Activated B cell treated with CpG ODN at 0.5 μM for 24 hours (primary cell): ENCODE measurements at regions of chr20 and their contacts with region 1.

Region 1: DNA sequence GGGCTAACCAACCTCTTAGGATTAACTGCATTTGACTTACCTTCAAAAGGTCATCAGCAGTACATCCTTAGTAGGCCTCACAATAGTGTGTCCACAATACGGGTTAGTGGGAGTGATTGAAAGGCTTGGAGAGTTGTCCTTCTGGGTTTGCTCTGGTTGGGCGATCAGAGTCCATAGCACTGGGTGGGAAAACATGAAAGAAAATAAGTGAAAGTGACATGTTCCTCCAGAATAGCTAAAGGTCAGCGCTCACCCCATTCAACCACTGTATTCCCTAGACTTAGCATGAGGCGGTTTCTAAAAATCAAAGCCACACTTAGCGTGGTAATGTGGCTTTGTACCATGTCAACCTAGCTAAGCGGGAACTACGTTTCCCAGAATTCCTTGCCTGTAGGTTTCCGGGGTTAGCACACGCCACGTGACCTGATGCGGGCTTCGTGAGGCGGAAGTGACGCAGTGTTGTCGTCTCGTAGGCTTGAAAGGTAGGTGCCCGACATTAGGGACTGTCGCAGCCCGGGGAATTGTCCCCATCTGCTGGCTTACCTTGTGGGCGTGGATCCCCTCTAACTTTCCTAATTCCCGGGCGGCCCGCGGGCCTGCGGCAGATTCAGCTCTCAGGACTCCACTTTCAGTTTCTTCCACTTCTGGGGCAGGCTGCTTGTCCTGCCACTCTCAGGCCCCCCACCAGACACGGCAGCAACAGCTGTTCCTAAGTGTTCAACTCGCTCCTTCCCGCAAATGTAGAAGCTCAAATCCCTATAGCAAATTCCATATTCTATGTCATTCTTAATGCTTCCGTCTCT is 19.8 kb upstream of the SCP2D1 start:
- DNase-seq: peak; percentile 73
- ATAC-seq: peak; percentile 92
- H3K4me3 Mint-ChIP-seq: peak overlapping the region; percentile 93
- H3K27ac Mint-ChIP-seq: peak overlapping the region; percentile 97
- H3K4me1 Mint-ChIP-seq: peaks cover 18% of the 10 kb centered on the region
- H3K27me3 Mint-ChIP-seq: peaks cover 11% of the 10 kb centered on the region
- CTCF ChIP-seq: no peak

Region 2: DNA sequence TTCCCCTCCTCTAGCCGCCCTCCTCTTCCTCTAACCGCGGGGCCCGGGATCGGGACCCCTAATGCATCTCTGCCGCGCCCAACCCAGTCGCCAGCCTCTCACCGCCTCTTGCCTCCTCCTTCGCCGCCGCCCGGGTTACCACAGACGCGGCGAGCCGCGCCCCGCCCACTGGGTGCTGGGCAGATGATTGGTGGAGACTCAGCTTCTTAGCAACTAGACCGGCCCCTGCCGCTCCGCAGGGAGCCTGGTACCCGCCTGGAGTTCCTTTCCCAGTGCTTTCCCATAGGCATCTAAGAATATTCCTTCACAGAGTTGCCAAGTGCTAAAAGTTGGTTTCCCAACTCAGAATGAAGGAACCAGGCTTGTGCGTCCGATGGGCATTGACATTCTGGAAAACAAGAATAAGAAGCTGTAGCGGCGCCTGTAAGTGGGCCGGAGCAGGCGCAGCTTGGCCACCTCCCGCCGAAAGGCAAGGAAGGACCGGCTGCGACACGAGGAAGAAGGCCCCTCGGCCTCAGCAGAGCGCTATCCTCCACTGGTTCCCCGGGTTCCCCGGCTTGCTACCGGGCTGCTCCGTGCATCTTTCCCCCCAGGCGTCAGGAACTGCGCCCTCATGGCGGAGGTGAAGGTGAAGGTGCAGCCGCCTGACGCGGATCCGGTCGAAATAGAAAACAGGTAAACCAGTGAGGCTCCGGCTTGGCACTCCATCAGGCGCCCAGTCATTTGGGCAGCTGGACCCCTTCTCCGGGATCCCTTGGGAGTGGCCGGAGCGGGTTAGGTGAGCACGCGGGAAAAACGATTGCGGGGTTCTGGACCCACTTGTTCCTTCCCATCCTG is 326.7 kb before region 1 on chr20 and contains the starts of genes DZANK1 and POLR3F:
- CTCF ChIA-PET with region 1: no interaction called
- POLR2A ChIA-PET with region 1: no interaction called
- intact Hi-C with region 1: loop called (anchors 1 kb)
- DNase-seq: peak; percentile 88
- ATAC-seq: peak; percentile 96
- H3K4me3 Mint-ChIP-seq: peak within 1 kb of the TSS; percentile 99
- H3K27ac Mint-ChIP-seq: peak within 1 kb of the TSS; percentile 95
- H3K4me1 Mint-ChIP-seq: peaks cover 27% of the 10 kb centered on the region
- H3K27me3 Mint-ChIP-seq: no peaks in the 10 kb centered on the region
- CTCF ChIP-seq: no peak
- total RNA-seq, gene DZANK1: 5.3 and 6.0 TPM in 2 replicates
- total RNA-seq, gene POLR3F: 13.3 and 14.5 TPM in 2 replicates

Region 3: GRCh38 chr20:18566892-18567742 is 226.7 kb before region 1 on chr20 and contains the start of gene SMIM26:
- CTCF ChIA-PET with region 1: no interaction called
- POLR2A ChIA-PET with region 1: interaction called, 3 read pairs
- intact Hi-C with region 1: loop called (anchors 1 kb)
- DNase-seq: peak; percentile 91
- ATAC-seq: peak; percentile 96
- H3K4me3 Mint-ChIP-seq: peak within 1 kb of the TSS; percentile 94
- H3K27ac Mint-ChIP-seq: peak within 1 kb of the TSS; percentile 94
- H3K4me1 Mint-ChIP-seq: peaks cover 23% of the 10 kb centered on the region
- H3K27me3 Mint-ChIP-seq: no peaks in the 10 kb centered on the region
- CTCF ChIP-seq: no peak
- total RNA-seq, gene SMIM26: 48.9 and 51.7 TPM in 2 replicates

Region 4: GRCh38 chr20:18632196-18633009 is 161.4 kb before region 1 on chr20:
- CTCF ChIA-PET with region 1: interaction called, 6 read pairs
- POLR2A ChIA-PET with region 1: interaction called, 3 read pairs
- intact Hi-C with region 1: loop called (anchors 1 kb)
- DNase-seq: peak; percentile 40
- ATAC-seq: peak; percentile 98
- H3K4me3 Mint-ChIP-seq: no peak overlapping the region
- H3K27ac Mint-ChIP-seq: no peak overlapping the region
- H3K4me1 Mint-ChIP-seq: no peaks in the 10 kb centered on the region
- H3K27me3 Mint-ChIP-seq: no peaks in the 10 kb centered on the region
- CTCF ChIP-seq: peak; percentile 77

Region 5: GRCh38 chr20:18929800-18930199 is 136.0 kb after region 1 on chr20:
- CTCF ChIA-PET with region 1: no interaction called
- POLR2A ChIA-PET with region 1: no interaction called
- intact Hi-C with region 1: no loop called
- DNase-seq: no peak
- ATAC-seq: no peak
- H3K4me3 Mint-ChIP-seq: no peak overlapping the region
- H3K27ac Mint-ChIP-seq: no peak overlapping the region
- H3K4me1 Mint-ChIP-seq: no peaks in the 10 kb centered on the region
- H3K27me3 Mint-ChIP-seq: no peaks in the 10 kb centered on the region
- CTCF ChIP-seq: no peak

Region 6: DNA sequence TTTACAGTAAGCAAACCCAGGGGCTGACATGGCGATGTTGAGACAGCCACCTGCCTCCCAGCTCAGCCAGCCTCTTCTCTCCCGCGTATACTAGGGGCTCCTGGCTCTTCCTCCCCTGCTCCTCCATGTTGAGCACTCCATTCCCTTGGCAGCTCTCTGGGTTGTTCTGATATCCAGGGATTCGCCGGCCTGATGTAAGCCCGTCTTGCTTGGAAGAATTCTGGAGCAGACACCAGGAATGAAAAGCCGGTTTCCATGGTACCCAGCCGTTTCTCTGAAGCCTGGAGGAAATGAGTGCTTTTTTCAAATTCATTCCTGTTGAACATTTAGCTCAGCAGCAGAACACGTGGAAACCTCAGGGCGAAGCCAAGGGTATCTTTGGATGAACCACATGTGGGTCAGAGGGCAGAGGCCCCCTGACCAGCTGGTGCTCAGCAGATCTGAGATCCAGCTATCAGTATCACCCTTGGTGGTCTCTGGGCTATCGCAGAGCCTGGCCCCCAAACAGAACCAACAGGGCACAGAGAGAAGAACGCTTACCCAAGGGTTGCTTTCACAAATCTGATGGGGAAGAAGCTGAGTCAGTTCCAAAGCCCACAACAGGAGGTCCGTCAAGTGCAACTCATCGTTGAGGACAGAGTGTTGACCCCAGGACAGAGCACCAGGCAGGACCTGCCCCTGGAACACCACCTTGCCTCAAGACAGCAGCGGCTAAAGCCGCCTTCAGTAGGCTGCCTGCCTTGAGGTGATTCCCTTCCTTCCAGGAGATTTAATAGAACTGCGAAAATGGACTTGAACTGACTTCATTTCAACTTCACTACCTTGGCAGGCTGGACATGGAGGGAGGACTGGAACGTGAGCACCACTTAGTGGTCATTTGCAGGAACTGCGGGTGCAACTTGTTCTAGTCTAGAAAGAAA is 868.2 kb after region 1 on chr20:
- CTCF ChIA-PET with region 1: no interaction called
- POLR2A ChIA-PET with region 1: no interaction called
- intact Hi-C with region 1: loop called (anchors 10 kb)
- DNase-seq: peak; percentile 28
- ATAC-seq: peak; percentile 38
- H3K4me3 Mint-ChIP-seq: no peak overlapping the region
- H3K27ac Mint-ChIP-seq: no peak overlapping the region
- H3K4me1 Mint-ChIP-seq: peaks cover 32% of the 10 kb centered on the region
- H3K27me3 Mint-ChIP-seq: peaks cover 21% of the 10 kb centered on the region
- CTCF ChIP-seq: peak; percentile 99